Activated CD4-positive, alpha-beta memory T cell treated with anti-CD3 and anti-CD28 coated beads, Interleukin-2, amount 10 ng/mL, durations not matched to agents 7 days and 5 days (primary cell): ENCODE measurements at regions of chr15 and their contacts with region 1.

Region 1: DNA sequence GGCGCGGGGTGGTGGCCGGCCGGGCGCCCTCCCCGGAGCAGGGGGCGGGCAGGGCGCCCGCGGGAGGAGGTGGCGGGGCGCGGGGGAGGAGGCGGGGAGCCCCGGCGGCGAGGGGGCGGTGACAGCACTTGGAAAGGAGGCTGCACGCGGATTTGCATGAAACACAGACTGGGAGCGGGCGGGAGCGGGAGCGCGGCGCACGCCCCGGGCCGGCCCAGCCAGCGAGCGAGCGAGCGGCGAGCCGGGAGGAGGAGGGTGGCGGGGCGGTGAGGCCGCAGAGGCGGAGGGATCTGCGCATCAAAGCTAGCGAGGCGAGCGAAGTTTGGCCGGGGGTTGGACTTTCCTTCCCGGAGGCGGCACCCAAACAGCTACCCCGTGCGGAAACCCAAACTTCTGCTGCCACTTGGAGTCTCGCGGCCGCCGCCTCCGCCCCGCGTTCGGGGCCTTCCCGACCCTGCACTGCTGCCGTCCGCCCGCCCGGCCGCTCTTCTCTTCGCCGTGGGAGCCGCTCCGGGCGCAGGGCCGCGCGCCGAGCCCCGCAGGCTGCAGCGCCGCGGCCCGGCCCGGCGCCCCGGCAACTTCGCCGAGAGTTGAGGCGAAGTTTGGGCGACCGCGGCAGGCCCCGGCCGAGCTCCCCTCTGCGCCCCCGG is at the start of gene SMAD3:
- DNase-seq: peak; percentile 84
- H3K4me3 Mint-ChIP-seq: peak within 1 kb of the TSS; percentile 98
- H3K27ac Mint-ChIP-seq: peak within 1 kb of the TSS; percentile 85
- H3K4me1 Mint-ChIP-seq: peaks cover 42% of the 10 kb centered on the region
- H3K27me3 Mint-ChIP-seq: peaks cover 17% of the 10 kb centered on the region
- total RNA-seq, gene SMAD3: 145 to 148 TPM

Region 2: GRCh38 chr15:67080900-67081431 is 15.4 kb after region 1 on chr15:
- CTCF ChIA-PET with region 1: interaction called, 51 read pairs
- POLR2A ChIA-PET with region 1: interaction called, 374 read pairs
- DNase-seq: peak; percentile 72
- H3K4me3 Mint-ChIP-seq: peak overlapping the region; percentile 41
- H3K27ac Mint-ChIP-seq: peak overlapping the region; percentile 95
- H3K4me1 Mint-ChIP-seq: peaks cover 96% of the 10 kb centered on the region
- H3K27me3 Mint-ChIP-seq: no peaks in the 10 kb centered on the region

Region 3: GRCh38 chr15:67120839-67121643 is 55.5 kb after region 1 on chr15:
- CTCF ChIA-PET with region 1: no interaction called
- POLR2A ChIA-PET with region 1: interaction called, 17 read pairs
- DNase-seq: peak; percentile 86
- H3K4me3 Mint-ChIP-seq: peak overlapping the region; percentile 23
- H3K27ac Mint-ChIP-seq: peak overlapping the region; percentile 77
- H3K4me1 Mint-ChIP-seq: peaks cover 95% of the 10 kb centered on the region
- H3K27me3 Mint-ChIP-seq: no peaks in the 10 kb centered on the region